Psoas muscle (tissue), 8 donors: ENCODE measurements at regions of chr20 and their contacts with region 1.

Region 1: DNA sequence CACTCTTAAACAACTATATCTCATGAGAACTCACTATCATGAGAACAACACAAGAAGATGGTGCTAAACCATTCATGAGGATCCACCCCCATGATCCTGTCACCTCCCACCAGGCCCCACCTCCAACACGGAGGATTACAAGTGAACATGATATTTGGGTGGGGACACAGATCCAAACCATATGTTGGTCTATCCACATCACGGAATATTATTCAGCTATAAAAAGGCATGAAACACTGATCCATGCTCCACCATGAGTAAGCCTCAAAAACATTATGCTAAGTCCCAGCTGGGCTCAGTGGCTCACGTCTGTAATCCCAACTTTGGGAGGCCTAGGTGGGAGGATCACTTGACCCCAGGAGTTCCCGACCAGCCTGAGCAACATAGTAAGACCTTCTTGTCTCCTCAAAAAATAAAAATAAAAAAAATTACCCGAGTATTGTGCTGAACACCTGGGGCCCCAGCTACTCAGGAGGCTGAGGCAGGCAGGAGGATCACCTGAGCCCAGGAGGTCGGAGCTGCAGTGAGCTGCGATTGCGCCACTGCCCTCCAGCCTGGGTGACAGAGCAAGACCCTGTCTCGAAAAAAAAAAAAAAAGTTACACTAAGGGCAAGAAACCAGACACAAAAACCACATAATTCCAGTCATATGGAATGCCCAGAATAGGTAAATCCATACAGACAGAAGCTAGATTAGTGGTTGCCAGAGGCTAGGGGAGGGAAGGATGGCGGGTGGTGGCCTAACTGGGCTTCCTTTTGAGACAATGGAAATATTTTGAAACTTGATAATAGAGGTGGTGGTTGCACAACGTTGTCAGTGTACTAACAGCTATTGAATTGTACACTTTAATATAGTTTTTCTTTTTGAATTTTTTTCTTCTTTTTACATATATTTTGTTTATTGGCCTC is 43.1 kb downstream of the ZNF217 start:
- DNase-seq: no peak
- ATAC-seq: no peak
- H3K4me3 ChIP-seq: no peak overlapping the region
- H3K27ac ChIP-seq: no peak overlapping the region
- H3K4me1 ChIP-seq: no peaks in the 10 kb centered on the region
- H3K27me3 ChIP-seq: no peaks in the 10 kb centered on the region
- CTCF ChIP-seq: no peak

Region 2: DNA sequence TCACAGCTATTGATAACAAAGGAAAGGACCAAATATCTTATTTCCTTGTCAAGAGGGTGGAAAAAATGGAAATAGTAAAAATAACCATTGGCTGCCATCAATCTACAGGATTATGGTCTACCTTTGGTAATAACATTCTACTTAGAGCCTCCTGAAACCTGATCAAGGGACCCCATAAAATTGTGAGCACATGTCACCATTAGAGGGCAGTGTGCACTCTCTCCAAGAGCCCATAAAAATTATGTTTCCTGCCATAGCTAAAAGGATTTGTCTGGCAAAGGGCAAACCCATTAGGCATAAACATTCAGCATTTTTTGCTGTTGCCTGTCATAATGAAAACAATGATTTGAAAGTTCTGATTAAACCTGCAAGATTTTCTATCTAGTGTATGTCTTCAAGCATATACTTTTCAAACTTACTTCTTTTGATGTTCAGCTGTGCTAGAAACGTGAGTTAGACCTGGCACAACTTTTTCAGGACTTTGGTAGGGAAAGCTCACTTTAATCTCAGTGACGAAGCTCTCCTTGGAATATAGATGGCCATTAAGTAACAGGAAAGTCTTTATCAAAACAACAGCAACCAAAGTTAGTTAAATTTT is 1238.3 kb before region 1 on chr20:
- intact Hi-C with region 1: loop called in 1 of 2 experiments (anchors 5 kb)
- DNase-seq: no peak
- ATAC-seq: peak in 1 of 4 donors; percentile 54
- H3K4me3 ChIP-seq: no peak overlapping the region
- H3K27ac ChIP-seq: no peak overlapping the region
- H3K4me1 ChIP-seq: no peaks in the 10 kb centered on the region
- H3K27me3 ChIP-seq: peaks cover 0 to 3% (median 0%) of the 10 kb centered on the region in 3 donors
- CTCF ChIP-seq: peak; percentile 53

Region 3: GRCh38 chr20:53245574-53245973 is 305.0 kb before region 1 on chr20:
- intact Hi-C with region 1: no loop called
- DNase-seq: no peak
- ATAC-seq: no peak
- H3K4me3 ChIP-seq: no peak overlapping the region
- H3K27ac ChIP-seq: no peak overlapping the region
- H3K4me1 ChIP-seq: no peaks in the 10 kb centered on the region
- H3K27me3 ChIP-seq: peaks cover 0 to 3% (median 0%) of the 10 kb centered on the region in 3 donors
- CTCF ChIP-seq: no peak

Region 4: GRCh38 chr20:53381568-53382262 is 168.8 kb before region 1 on chr20:
- intact Hi-C with region 1: no loop called
- DNase-seq: no peak
- ATAC-seq: no peak
- H3K4me3 ChIP-seq: no peak overlapping the region
- H3K27ac ChIP-seq: no peak overlapping the region
- H3K4me1 ChIP-seq: no peaks in the 10 kb centered on the region
- H3K27me3 ChIP-seq: no peaks in the 10 kb centered on the region
- CTCF ChIP-seq: no peak

Region 5: DNA sequence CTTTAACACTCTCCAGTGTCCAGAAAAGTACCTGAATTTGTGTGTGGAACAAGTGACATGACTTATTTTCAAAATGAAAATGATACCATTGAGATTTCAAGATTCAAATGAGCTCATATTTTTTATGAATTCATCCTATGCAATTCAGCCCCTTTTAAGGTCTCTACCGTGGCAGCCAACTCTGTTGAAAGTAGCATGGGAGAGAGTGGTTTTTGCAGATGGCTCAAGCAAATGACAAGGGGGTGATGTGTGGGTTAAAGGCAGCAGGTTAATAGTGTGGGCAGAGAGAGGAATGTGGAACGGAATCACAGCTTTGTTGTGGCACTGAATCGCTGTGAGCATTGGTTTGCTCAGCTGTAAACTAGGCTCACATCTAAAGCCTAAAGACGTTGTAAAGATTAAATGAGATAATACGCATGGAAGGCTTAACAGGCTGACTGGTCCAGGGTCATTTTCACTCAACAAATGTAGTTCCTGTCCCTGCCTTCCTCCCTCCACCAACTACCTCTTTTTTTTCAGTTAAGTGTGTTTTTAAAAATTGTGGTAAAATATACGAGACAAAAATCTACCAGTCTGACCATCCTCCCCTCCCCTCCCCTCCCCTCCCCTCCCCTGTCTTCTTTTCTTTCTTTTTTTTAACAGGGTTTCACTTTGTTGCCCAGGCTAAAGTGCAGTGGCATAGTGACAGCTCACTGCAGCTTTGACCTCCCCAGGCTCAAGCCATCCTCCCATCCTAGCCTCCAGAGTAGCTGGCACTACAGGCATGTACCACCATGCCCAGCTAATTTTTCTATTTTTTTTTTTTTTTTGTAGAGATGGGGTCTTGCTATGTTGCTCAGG is 157.8 kb after region 1 on chr20:
- intact Hi-C with region 1: no loop called
- DNase-seq: no peak
- ATAC-seq: no peak
- H3K4me3 ChIP-seq: no peak overlapping the region
- H3K27ac ChIP-seq: no peak overlapping the region
- H3K4me1 ChIP-seq: no peaks in the 10 kb centered on the region
- H3K27me3 ChIP-seq: no peaks in the 10 kb centered on the region
- CTCF ChIP-seq: no peak